Dendritic cell treated with granulocyte-macrophage colony-stimulating factor and Interleukin-4, amounts not matched to agents 40 ng/mL and 50 ng/mL, for 4 days (primary cell): ENCODE measurements at regions of chr6 and their contacts with region 1.

Region 1: GRCh38 chr6:127198549-127198948 is 68.1 kb upstream of the RNF146 start:
- H3K4me3 Mint-ChIP-seq: no peak overlapping the region
- H3K27ac Mint-ChIP-seq: no peak overlapping the region
- H3K4me1 Mint-ChIP-seq: peaks cover 18% of the 10 kb centered on the region
- H3K27me3 Mint-ChIP-seq: no peaks in the 10 kb centered on the region

Region 2: DNA sequence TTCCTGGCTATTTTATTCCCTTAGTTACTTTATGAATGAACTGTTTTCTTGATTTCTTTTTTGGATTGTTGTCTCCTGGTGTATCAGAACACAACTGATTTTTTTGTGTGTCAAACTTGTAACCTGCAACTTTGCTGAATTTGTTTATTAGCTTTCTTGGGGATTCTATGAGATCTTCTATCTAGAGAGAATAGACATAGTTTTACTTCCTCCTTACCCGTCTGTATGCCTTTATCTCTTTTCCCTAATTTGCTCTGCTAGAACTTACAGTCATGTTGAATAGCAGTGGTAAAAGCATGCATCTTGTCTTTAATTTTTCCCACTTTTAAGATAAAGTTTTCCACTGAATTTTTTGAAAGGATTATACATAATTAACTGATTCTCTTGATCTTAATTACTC is 81.3 kb after region 1 on chr6:
- intact Hi-C with region 1: loop called (anchors 5 kb)
- H3K4me3 Mint-ChIP-seq: no peak overlapping the region
- H3K27ac Mint-ChIP-seq: peak overlapping the region; percentile 33
- H3K4me1 Mint-ChIP-seq: peaks cover 11% of the 10 kb centered on the region
- H3K27me3 Mint-ChIP-seq: no peaks in the 10 kb centered on the region